Breast epithelium (tissue), 4 donors: ENCODE measurements at regions of chr1 and their contacts with region 1.

Region 1: DNA sequence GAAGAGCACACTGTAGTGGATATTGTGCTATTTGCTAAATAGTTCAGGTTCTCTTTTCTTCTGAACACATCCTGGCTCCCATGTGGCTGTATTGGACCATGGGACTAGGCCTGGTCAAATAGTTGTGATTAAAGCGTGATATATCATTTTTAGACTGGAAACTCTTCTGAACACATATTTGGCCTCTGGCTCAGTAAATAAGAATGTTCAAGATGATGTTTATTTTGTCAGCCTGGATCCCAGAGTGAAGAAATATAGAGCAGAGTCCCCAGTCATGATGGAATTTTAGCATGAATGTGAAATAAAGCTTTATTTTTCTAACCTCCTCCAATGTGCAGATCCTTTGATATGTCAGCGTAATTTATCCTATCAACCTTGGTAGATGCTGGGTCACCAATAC is 542.6 kb downstream of the ADGRL2 start:
- DNase-seq: no peak
- H3K4me3 ChIP-seq: no peak overlapping the region
- H3K27ac ChIP-seq: no peak overlapping the region
- H3K4me1 ChIP-seq: no peaks in the 10 kb centered on the region
- H3K27me3 ChIP-seq: no peaks in the 10 kb centered on the region
- CTCF ChIP-seq: no peak
- POLR2A ChIP-seq: no peak

Region 2: GRCh38 chr1:82297139-82297896 is 46.1 kb before region 1 on chr1:
- intact Hi-C with region 1: loop called (anchors 2 kb)
- DNase-seq: no peak
- H3K4me3 ChIP-seq: no peak overlapping the region
- H3K27ac ChIP-seq: no peak overlapping the region
- H3K4me1 ChIP-seq: no peaks in the 10 kb centered on the region
- H3K27me3 ChIP-seq: no peaks in the 10 kb centered on the region
- CTCF ChIP-seq: no peak
- POLR2A ChIP-seq: no peak

Region 3: GRCh38 chr1:82538876-82539275 is 195.5 kb after region 1 on chr1:
- intact Hi-C with region 1: no loop called
- DNase-seq: no peak
- H3K4me3 ChIP-seq: no peak overlapping the region
- H3K27ac ChIP-seq: no peak overlapping the region
- H3K4me1 ChIP-seq: no peaks in the 10 kb centered on the region
- H3K27me3 ChIP-seq: no peaks in the 10 kb centered on the region
- CTCF ChIP-seq: no peak
- POLR2A ChIP-seq: no peak